ENCODE measurements at regions of chr9 and their contacts with region 1.

Region 1: GRCh38 chr9:5375091-5375490 is 35.4 kb upstream of the RLN1 start:
- DNase-seq: peak; percentile 6
- H3K4me3 ChIP-seq: no peak overlapping the region
- H3K27ac ChIP-seq: peak overlapping the region; percentile 87
- H3K4me1 ChIP-seq: peaks cover 20% of the 10 kb centered on the region
- H3K27me3 ChIP-seq: no peaks in the 10 kb centered on the region
- CTCF ChIP-seq: no peak
- POLR2A ChIP-seq: no peak

Region 2: DNA sequence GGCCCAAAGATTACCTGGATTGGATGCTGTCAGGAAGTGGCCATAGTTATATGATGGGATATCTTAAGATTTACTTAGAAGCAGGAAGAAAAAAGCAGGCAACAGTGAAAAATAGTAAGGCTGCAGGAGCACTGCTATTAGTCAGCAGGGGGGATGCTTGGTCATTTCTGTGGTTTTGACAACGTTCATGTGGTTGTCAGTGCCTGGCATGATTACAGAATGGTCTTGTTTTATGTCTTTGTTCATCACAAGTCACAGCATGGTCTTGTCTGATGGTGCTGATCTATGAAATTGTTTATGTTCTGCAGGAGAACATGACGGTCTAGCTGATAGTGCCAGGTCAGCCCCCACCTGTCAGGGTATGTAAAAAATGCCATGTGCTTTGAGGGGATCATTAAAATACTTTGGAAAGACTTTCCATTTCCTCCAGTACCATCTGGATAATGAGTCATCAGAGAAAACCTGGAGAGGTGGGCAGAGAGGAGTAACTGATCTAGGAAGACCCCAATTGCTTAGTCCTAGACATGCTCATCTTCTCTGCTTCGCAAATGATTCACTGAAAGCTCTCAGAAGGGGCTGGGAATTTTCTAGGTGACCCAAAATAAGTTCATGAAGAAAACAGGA is 14.1 kb after region 1 on chr9:
- CTCF ChIA-PET with region 1: interaction called, 4 read pairs
- POLR2A ChIA-PET with region 1: no interaction called
- dilution Hi-C with region 1: no loop called
- intact Hi-C with region 1: loop called (anchors 1 kb)
- DNase-seq: no peak
- H3K4me3 ChIP-seq: no peak overlapping the region
- H3K27ac ChIP-seq: no peak overlapping the region
- H3K4me1 ChIP-seq: peaks cover 11% of the 10 kb centered on the region
- H3K27me3 ChIP-seq: no peaks in the 10 kb centered on the region
- CTCF ChIP-seq: no peak
- POLR2A ChIP-seq: no peak

Region 3: DNA sequence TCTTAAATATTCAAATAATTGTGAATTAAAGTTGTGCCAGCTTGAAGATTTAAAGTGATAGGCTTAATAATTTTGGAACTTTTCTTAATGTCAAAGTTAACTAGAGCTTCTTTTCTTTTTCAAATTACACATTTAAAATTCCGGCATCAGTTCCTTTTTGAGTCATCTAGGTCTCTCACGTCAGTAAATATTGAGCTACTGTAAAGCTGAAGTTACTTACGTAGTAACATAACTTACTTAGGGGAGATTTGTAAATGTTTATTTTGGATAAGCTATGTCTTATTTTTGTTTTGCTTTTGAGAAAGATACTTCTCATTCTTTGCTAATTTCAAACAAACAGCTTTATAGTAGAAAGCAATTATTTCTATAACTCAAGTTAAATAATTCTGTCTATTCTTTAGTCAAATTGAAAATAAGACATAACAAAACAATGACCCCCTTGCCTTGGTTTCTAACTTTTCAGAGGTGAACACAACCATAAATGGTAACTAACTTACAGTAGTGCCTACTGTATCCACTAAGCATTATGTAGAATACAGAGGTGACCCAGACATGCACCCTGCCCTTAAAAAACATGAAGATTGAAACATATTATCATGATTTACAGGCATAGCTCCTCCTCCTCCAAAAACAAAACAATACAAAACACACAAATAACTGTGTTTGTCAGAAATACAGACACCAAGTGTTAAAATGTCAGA is 105.1 kb after region 1 on chr9:
- CTCF ChIA-PET with region 1: no interaction called
- POLR2A ChIA-PET with region 1: no interaction called
- dilution Hi-C with region 1: no loop called
- intact Hi-C with region 1: no loop called
- DNase-seq: no peak
- H3K4me3 ChIP-seq: no peak overlapping the region
- H3K27ac ChIP-seq: no peak overlapping the region
- H3K4me1 ChIP-seq: no peaks in the 10 kb centered on the region
- H3K27me3 ChIP-seq: no peaks in the 10 kb centered on the region
- CTCF ChIP-seq: no peak
- POLR2A ChIP-seq: no peak

Region 4: DNA sequence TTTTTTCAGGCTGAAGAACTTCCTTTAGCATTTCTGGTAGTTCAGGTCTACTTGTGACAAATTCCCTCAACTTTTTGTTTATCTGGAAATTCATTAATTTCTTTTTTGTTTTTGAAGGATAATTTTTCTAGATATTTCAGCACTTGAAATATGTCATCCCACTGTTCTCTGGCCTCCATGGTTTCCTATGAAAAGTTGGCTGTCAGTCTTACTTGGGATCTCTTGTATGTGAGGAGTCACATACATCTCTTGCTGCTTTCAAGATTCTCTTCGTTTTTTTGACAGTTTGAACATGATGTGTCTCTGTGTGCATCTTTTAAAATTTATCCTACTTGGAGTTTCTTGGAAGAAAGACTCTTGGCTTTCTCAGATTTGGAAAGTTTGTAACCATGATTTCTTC is 333.3 kb after region 1 on chr9:
- CTCF ChIA-PET with region 1: no interaction called
- POLR2A ChIA-PET with region 1: no interaction called
- dilution Hi-C with region 1: no loop called
- intact Hi-C with region 1: no loop called
- DNase-seq: no peak
- H3K4me3 ChIP-seq: no peak overlapping the region
- H3K27ac ChIP-seq: no peak overlapping the region
- H3K4me1 ChIP-seq: no peaks in the 10 kb centered on the region
- H3K27me3 ChIP-seq: no peaks in the 10 kb centered on the region
- CTCF ChIP-seq: no peak
- POLR2A ChIP-seq: no peak

Measured in endothelial cell of umbilical vein (primary cell).